ENCODE measurements at regions of chr1 and their contacts with region 1.

Region 1: DNA sequence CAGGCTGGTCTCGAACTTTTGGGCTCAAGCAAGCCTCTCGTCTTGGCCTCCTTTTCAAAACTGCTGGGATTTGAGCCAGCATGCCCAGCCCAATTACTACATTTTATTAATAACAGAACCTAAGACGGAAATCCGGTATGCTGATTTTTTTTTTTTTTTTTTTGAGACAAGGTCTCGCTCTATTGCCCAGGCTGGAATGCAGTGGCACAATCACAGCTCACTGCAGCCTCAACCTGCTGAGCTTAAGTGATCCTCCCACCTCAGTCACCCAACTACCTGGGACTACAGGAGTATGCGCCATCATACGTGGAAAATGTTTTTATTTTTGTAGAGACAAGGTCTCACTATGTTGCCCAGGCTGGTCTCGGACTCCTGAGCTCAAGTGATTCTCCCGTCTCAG is 20.2 kb downstream of the ACBD3 start:
- DNase-seq: no peak
- H3K4me3 ChIP-seq: no peak overlapping the region
- H3K27ac ChIP-seq: no peak overlapping the region
- H3K4me1 ChIP-seq: no peaks in the 10 kb centered on the region
- H3K27me3 ChIP-seq: no peaks in the 10 kb centered on the region
- CTCF ChIP-seq: no peak
- EP300 ChIP-seq: no peak
- POLR2A ChIP-seq: no peak
- RAD21 ChIP-seq: no peak

Region 2: GRCh38 chr1:226083302-226084101 is 82.8 kb before region 1 on chr1:
- CTCF ChIA-PET with region 1: no interaction called
- POLR2A ChIA-PET with region 1: no interaction called
- DNase-seq: peak in 1 of 2 experiments; percentile 98
- H3K4me3 ChIP-seq: peak overlapping the region; percentile 60 to 81 (median 71)
- H3K27ac ChIP-seq: no peak overlapping the region
- H3K4me1 ChIP-seq: peaks cover 0 to 5% (median 3%) of the 10 kb centered on the region in 4 experiments; a peak in 5 of 7 replicates
- H3K27me3 ChIP-seq: peaks cover 0 to 11% (median 9%) of the 10 kb centered on the region in 4 experiments; a peak in 3 of 7 replicates
- CTCF ChIP-seq: no peak
- EP300 ChIP-seq: no peak
- POLR2A ChIP-seq: no peak
- RAD21 ChIP-seq: 0 out of 4 replicates have a peak, but pooled peaks of 1 of the 2 experiments have one; percentile 0

Region 3: GRCh38 chr1:226186124-226187018 is 20.0 kb after region 1 on chr1 and contains the start of gene ACBD3:
- CTCF ChIA-PET with region 1: interaction called, 10 read pairs
- POLR2A ChIA-PET with region 1: no interaction called
- DNase-seq: peak; percentile 64 to 90
- H3K4me3 ChIP-seq: peak within 1 kb of the TSS; percentile 65 to 90 (median 79)
- H3K27ac ChIP-seq: peak within 1 kb of the TSS; percentile 80; the same call in 1 of the 2 replicates
- H3K4me1 ChIP-seq: peaks cover 0 to 4% (median 3%) of the 10 kb centered on the region in 4 experiments; a peak in 3 of 7 replicates
- H3K27me3 ChIP-seq: no peaks in the 10 kb centered on the region
- CTCF ChIP-seq: no peak
- EP300 ChIP-seq: peak in 1 of 2 experiments; percentile 62; a peak in 1 of 3 replicates
- POLR2A ChIP-seq: peak; percentile 92 to 95
- RAD21 ChIP-seq: peak in 1 of 2 experiments; percentile 23; a peak in 1 of 4 replicates
- total RNA-seq, gene ACBD3: 28.2 and 29.4 TPM in 2 replicates

Region 4: GRCh38 chr1:226209307-226210059 is 43.1 kb after region 1 on chr1:
- CTCF ChIA-PET with region 1: no interaction called
- POLR2A ChIA-PET with region 1: no interaction called
- DNase-seq: no peak
- H3K4me3 ChIP-seq: no peak overlapping the region
- H3K27ac ChIP-seq: no peak overlapping the region
- H3K4me1 ChIP-seq: peaks cover 2 to 14% (median 8%) of the 10 kb centered on the region in 4 experiments
- H3K27me3 ChIP-seq: peaks cover 0 to 4% (median 1%) of the 10 kb centered on the region in 4 experiments; a peak in 2 of 7 replicates
- CTCF ChIP-seq: no peak
- EP300 ChIP-seq: no peak
- POLR2A ChIP-seq: no peak
- RAD21 ChIP-seq: no peak

Measured in H1 (cell line).